CD4-positive, alpha-beta memory T cell (primary cell): ENCODE measurements at regions of chr19 and their contacts with region 1.

Region 1: DNA sequence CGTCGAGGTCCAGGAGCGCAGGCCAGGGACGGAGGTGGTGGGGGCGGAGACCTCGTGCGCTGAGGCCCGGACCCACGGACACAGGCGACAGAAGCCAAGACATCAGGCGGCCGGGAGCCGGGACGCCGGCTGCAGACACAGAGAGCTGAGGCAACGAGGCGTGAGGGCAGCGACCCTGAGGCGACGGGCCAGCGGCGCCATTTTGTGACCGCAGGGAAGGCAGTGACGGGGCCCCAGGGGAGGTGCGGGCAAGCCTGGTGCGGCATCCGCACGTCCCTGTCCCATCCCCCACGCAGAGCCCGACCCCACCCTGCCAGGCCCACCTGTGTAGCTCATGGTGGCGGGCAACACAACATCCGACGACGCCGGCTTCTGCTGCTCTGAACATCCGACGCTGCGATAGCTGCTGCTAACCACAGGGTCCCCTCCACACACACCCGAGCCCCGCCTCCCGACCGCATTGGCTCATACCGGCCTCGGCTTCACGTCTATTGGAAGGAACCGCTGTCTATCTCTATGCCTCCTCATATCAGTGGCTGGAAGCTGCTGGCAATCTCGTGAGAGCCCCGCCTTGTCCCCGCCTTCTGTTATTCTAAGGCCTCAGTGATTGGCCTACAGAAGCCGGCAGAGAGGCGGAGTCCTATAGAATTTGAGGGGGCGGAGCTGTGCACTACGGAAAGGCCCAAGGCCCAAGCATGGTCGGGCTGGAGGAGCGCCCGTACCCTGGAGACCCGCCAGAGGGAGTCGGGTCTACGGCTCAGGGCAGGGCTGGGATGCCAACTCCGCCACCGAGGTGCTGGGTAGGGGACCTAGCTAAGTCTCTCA is at the start of gene AKAP8L:
- DNase-seq: peak; percentile 99 to 100 (median 100)
- H3K4me3 ChIP-seq: peak within 1 kb of the TSS; percentile 91 to 95
- H3K4me3 Mint-ChIP-seq: peak within 1 kb of the TSS; percentile 96 to 100 (median 100)
- H3K27ac ChIP-seq: peak within 1 kb of the TSS; percentile 77
- H3K27ac Mint-ChIP-seq: peak within 1 kb of the TSS; percentile 87 to 100 (median 99)
- H3K4me1 ChIP-seq: peaks cover 45% of the 10 kb centered on the region
- H3K4me1 Mint-ChIP-seq: peaks cover 31 to 58% (median 38%) of the 10 kb centered on the region in 4 donors
- H3K27me3 ChIP-seq: no peaks in the 10 kb centered on the region
- H3K27me3 Mint-ChIP-seq: no peaks in the 10 kb centered on the region
- total RNA-seq, gene AKAP8L: 177 to 182 TPM

Region 2: DNA sequence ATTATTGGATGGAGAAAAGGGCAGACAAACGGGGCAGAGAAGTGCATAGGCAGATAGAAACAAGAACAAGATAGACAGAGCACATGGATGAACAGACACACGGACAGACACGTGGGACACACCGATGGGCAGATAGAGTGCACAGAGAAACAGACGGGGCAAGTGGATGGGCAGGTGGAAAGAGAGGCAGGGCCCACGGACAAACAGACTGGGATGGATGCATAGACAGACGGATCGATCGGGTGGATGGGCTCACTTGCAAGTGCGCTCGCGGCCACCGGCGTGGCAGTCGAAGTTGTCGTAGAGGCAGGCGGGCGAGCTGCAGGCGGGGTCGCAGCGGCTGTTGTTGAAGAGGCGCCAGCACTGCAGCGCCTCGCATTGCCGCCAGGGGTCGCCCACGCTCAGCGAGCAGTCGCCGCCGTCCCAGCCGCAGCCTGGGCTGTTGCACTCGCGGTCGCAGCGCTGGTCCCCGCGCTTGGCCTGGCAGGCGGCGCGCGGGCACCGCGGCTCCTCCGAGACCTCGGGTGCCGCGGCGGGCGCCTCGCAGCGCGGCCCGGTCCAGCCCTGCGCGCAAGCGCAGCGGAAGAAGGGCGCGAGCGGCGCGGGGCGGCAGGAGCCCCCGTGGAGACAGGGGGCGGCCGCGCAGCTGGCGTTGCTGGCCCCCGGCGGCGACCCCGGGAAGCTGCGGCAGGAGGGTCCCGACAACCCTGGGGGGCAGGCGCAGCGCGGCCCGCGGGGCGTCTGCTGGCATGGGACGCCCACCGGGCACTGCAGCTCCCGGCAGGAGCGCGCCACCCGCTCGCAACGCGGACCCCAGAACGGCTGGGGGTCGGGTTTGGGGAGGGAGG is 241.3 kb before region 1 on chr19:
- CTCF ChIA-PET with region 1: interaction called, 19 read pairs
- POLR2A ChIA-PET with region 1: interaction called, 11 read pairs
- intact Hi-C with region 1: loop called (anchors 1 kb)
- DNase-seq: peak; percentile 69 to 83 (median 80)
- H3K4me3 ChIP-seq: no peak overlapping the region
- H3K4me3 Mint-ChIP-seq: peak overlapping the region in 5 of 8 donors; percentile 2 to 74 (median 57)
- H3K27ac ChIP-seq: no peak overlapping the region
- H3K27ac Mint-ChIP-seq: peak overlapping the region in 2 of 7 donors; percentile 30 to 75
- H3K4me1 ChIP-seq: peaks cover 3% of the 10 kb centered on the region
- H3K4me1 Mint-ChIP-seq: peaks cover 4 to 11% (median 6%) of the 10 kb centered on the region in 4 donors
- H3K27me3 ChIP-seq: no peaks in the 10 kb centered on the region
- H3K27me3 Mint-ChIP-seq: peaks cover 7 to 11% of the 10 kb centered on the region in 2 donors

Region 3: DNA sequence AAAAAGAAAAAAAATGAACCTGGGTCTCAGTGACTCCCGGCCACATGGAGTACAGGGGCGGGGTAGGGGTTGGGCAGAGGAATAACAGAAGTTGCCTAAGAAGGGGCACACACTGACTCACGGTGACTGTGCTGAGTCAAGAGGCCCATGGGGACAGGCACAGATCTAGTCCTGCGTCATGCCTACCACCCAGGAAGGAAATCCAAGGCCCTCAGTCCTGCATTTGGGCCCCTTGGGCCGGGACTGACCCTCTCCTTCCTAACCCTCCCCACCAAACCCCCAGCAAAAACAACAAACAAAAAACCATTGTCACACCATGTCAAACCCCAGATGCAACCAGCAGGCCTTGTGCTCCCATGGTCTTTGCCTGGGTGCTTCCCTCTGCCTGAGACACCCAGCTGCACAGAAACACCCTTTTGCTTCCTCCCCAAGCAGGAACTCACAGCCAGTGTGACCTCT is 208.4 kb before region 1 on chr19:
- CTCF ChIA-PET with region 1: no interaction called
- POLR2A ChIA-PET with region 1: no interaction called
- intact Hi-C with region 1: no loop called
- DNase-seq: no peak
- H3K4me3 ChIP-seq: no peak overlapping the region
- H3K4me3 Mint-ChIP-seq: no peak overlapping the region
- H3K27ac ChIP-seq: no peak overlapping the region
- H3K27ac Mint-ChIP-seq: peak overlapping the region in 2 of 7 donors; percentile 23 to 44
- H3K4me1 ChIP-seq: no peaks in the 10 kb centered on the region
- H3K4me1 Mint-ChIP-seq: no peaks in the 10 kb centered on the region
- H3K27me3 ChIP-seq: no peaks in the 10 kb centered on the region
- H3K27me3 Mint-ChIP-seq: peaks cover 4 to 13% of the 10 kb centered on the region in 2 donors

Region 4: GRCh38 chr19:15379083-15379995 is 39.5 kb before region 1 on chr19 and contains the start of gene AKAP8:
- CTCF ChIA-PET with region 1: interaction called, 54 read pairs
- POLR2A ChIA-PET with region 1: interaction called, 168 read pairs
- intact Hi-C with region 1: loop called (anchors 1 kb)
- DNase-seq: peak; percentile 98 to 99 (median 98)
- H3K4me3 ChIP-seq: peak within 1 kb of the TSS; percentile 88 to 100
- H3K4me3 Mint-ChIP-seq: peak within 1 kb of the TSS; percentile 98 to 100 (median 100)
- H3K27ac ChIP-seq: peak within 1 kb of the TSS; percentile 99
- H3K27ac Mint-ChIP-seq: peak within 1 kb of the TSS; percentile 99 to 100 (median 100)
- H3K4me1 ChIP-seq: peaks cover 38% of the 10 kb centered on the region
- H3K4me1 Mint-ChIP-seq: peaks cover 25 to 48% (median 34%) of the 10 kb centered on the region in 4 donors
- H3K27me3 ChIP-seq: no peaks in the 10 kb centered on the region
- H3K27me3 Mint-ChIP-seq: no peaks in the 10 kb centered on the region
- total RNA-seq, gene AKAP8: 69.9 to 71.5 TPM

Region 5: GRCh38 chr19:15457701-15458484 is 39.1 kb after region 1 on chr19:
- CTCF ChIA-PET with region 1: interaction called, 82 read pairs
- POLR2A ChIA-PET with region 1: interaction called, 132 read pairs
- intact Hi-C with region 1: no loop called
- DNase-seq: no peak
- H3K4me3 ChIP-seq: no peak overlapping the region
- H3K4me3 Mint-ChIP-seq: no peak overlapping the region
- H3K27ac ChIP-seq: no peak overlapping the region
- H3K27ac Mint-ChIP-seq: peak overlapping the region in 4 of 7 donors; percentile 37 to 93 (median 48)
- H3K4me1 ChIP-seq: peaks cover 38% of the 10 kb centered on the region
- H3K4me1 Mint-ChIP-seq: peaks cover 9 to 45% (median 28%) of the 10 kb centered on the region in 4 donors
- H3K27me3 ChIP-seq: no peaks in the 10 kb centered on the region
- H3K27me3 Mint-ChIP-seq: no peaks in the 10 kb centered on the region

Region 6: GRCh38 chr19:15502264-15502663 is 83.5 kb after region 1 on chr19:
- CTCF ChIA-PET with region 1: no interaction called
- POLR2A ChIA-PET with region 1: no interaction called
- intact Hi-C with region 1: no loop called
- DNase-seq: no peak
- H3K4me3 ChIP-seq: no peak overlapping the region
- H3K4me3 Mint-ChIP-seq: no peak overlapping the region
- H3K27ac ChIP-seq: no peak overlapping the region
- H3K27ac Mint-ChIP-seq: no peak overlapping the region
- H3K4me1 ChIP-seq: no peaks in the 10 kb centered on the region
- H3K4me1 Mint-ChIP-seq: peaks cover 2 to 19% (median 6%) of the 10 kb centered on the region in 4 donors
- H3K27me3 ChIP-seq: no peaks in the 10 kb centered on the region
- H3K27me3 Mint-ChIP-seq: no peaks in the 10 kb centered on the region

Region 7: GRCh38 chr19:15544283-15544682 is 125.5 kb after region 1 on chr19:
- CTCF ChIA-PET with region 1: interaction called, 319 read pairs
- POLR2A ChIA-PET with region 1: no interaction called
- intact Hi-C with region 1: no loop called
- DNase-seq: no peak
- H3K4me3 ChIP-seq: no peak overlapping the region
- H3K4me3 Mint-ChIP-seq: no peak overlapping the region
- H3K27ac ChIP-seq: no peak overlapping the region
- H3K27ac Mint-ChIP-seq: no peak overlapping the region
- H3K4me1 ChIP-seq: no peaks in the 10 kb centered on the region
- H3K4me1 Mint-ChIP-seq: no peaks in the 10 kb centered on the region
- H3K27me3 ChIP-seq: no peaks in the 10 kb centered on the region
- H3K27me3 Mint-ChIP-seq: no peaks in the 10 kb centered on the region

Region 8: GRCh38 chr19:15759962-15760565 is 341.3 kb after region 1 on chr19:
- CTCF ChIA-PET with region 1: no interaction called
- POLR2A ChIA-PET with region 1: no interaction called
- intact Hi-C with region 1: no loop called
- DNase-seq: no peak
- H3K4me3 ChIP-seq: no peak overlapping the region
- H3K4me3 Mint-ChIP-seq: peak overlapping the region in 1 of 8 donors; percentile 31
- H3K27ac ChIP-seq: no peak overlapping the region
- H3K27ac Mint-ChIP-seq: no peak overlapping the region
- H3K4me1 ChIP-seq: no peaks in the 10 kb centered on the region
- H3K4me1 Mint-ChIP-seq: no peaks in the 10 kb centered on the region
- H3K27me3 ChIP-seq: peaks cover 18% of the 10 kb centered on the region
- H3K27me3 Mint-ChIP-seq: peaks cover 40 to 43% of the 10 kb centered on the region in 2 donors